MCF 10A (cell line): ENCODE measurements at regions of chr20 and their contacts with region 1.

Region 1: DNA sequence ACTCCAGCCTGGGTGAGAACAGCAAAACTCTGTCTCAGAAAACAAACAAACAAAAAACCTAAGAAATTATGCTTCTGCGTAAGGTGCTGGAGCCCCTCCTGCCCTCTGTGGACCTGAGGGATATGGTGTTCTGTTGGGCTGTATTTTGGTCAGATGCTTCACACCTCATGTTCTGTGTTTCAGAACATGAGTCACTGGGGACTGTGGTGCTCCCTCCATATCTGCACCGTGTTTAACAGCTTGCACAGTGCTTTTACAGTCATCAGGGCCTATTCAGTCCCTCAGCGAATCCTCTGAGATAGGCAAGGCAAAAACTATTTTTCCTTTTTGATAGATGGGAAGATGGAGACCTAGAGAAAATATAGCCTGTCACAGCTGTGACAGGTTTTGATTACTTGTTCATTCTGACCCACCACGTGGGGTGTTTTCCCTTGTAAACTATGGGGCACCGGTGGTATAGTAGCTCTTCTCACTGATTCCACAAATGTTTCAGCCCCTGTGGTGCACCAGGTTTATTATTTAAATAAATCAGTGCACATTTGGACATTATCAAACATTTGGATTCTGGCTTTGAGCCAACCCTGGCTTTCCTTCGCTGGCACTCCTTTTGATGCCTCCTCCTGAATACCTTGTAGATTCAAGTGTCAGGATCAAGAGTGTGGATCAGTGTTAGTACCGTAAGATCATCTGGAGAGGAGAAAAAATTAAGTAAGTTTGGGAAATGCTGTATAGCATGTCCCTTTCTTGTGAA is 9.6 kb downstream of the TTPAL start:
- DNase-seq: no peak
- H3K4me3 Mint-ChIP-seq: no peak overlapping the region
- H3K27ac Mint-ChIP-seq: no peak overlapping the region
- H3K4me1 Mint-ChIP-seq: peaks cover 5% of the 10 kb centered on the region
- H3K27me3 Mint-ChIP-seq: no peaks in the 10 kb centered on the region
- CTCF ChIP-seq: no peak

Region 2: DNA sequence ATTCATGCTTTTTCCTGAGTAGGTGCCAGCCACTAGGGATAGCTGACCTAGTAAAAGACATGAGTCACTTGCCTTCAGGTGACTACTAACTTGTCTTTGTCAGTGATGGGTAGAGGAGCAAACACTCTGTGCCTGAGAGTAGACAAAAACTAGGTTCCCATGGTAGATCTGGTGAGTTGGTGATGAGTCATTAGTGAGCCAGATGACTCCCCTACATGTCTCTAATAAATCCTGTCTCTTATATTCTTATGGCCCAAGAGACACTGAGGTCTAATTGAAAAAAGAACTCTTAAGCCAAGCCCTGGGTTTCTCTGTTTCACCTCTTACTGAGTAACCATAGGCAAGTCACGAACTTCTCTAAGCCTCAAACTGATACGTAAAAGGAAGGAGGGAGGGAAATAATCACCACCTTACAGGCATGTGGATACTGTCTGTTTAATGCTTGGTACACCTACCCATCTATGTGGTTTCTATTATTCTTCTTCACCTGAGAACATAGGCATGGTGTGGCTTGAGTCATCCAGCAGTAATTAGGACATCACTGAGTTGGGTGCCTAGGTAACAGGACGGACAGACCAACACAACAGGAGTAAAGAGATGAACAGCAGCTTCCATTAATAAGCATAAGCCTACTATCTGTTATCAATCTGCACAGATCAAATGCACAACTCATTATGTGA is 10.7 kb after region 1 on chr20:
- CTCF ChIA-PET with region 1: interaction called, 3 read pairs
- POLR2A ChIA-PET with region 1: interaction called, 24 read pairs
- intact Hi-C with region 1: no loop called
- DNase-seq: peak; percentile 95
- H3K4me3 Mint-ChIP-seq: peak overlapping the region; percentile 26
- H3K27ac Mint-ChIP-seq: peak overlapping the region; percentile 84
- H3K4me1 Mint-ChIP-seq: peaks cover 47% of the 10 kb centered on the region
- H3K27me3 Mint-ChIP-seq: no peaks in the 10 kb centered on the region
- CTCF ChIP-seq: no peak